ENCODE measurements at regions of chr17 and their contacts with region 1.

Region 1: DNA sequence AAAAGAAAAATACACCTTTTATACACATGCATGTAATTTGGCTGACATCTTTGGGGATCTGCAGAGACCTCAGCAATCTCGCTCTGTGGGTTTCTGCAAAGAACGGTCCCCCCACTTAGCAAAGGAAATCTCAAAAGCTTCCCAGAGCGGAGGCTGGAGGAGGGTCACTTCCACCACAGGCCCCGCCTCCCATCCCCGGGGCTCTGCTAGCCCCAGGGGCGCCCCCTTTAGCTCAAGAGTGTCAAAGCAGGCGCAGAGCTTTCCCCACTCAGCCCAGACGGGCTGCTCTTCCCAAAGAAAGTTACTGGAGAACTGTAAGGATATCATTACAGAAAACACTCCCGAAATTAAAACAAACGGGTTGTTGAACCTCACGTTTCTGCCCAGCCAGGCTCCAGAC is 11.4 kb downstream of the SLC13A5 start:
- DNase-seq: peak; percentile 61
- ATAC-seq: peak; percentile 29
- H3K4me3 ChIP-seq: peak overlapping the region in 1 of 3 experiments; percentile 41; a peak in 1 of 6 replicates
- H3K27ac ChIP-seq: peak overlapping the region; percentile 97
- H3K4me1 ChIP-seq: peaks cover 87% of the 10 kb centered on the region
- H3K27me3 ChIP-seq: no peaks in the 10 kb centered on the region
- CTCF ChIP-seq: peak; percentile 64
- EP300 ChIP-seq: no peak
- POLR2A ChIP-seq: no peak
- RAD21 ChIP-seq: peak; percentile 46; the same call in 1 of the 2 replicates

Region 2: GRCh38 chr17:6677158-6677831 is 24.4 kb before region 1 on chr17:
- CTCF ChIA-PET with region 1: no interaction called
- POLR2A ChIA-PET with region 1: interaction called, 265 read pairs
- in situ Hi-C with region 1: no loop called
- intact Hi-C with region 1: loop called (anchors 2 kb)
- DNase-seq: peak; percentile 27
- ATAC-seq: peak; percentile 69
- H3K4me3 ChIP-seq: peak overlapping the region; percentile 33 to 64 (median 43); a peak in 5 of 6 replicates
- H3K27ac ChIP-seq: peak overlapping the region; percentile 49
- H3K4me1 ChIP-seq: peaks cover 72% of the 10 kb centered on the region
- H3K27me3 ChIP-seq: no peaks in the 10 kb centered on the region; a peak in 1 of 5 replicates
- CTCF ChIP-seq: no peak; the same call in 1 of the 2 replicates
- EP300 ChIP-seq: no peak
- POLR2A ChIP-seq: peak in 1 of 2 experiments; percentile 50; a peak in 1 of 4 replicates
- RAD21 ChIP-seq: no peak

Region 3: GRCh38 chr17:6686026-6686425 is 15.7 kb before region 1 on chr17:
- CTCF ChIA-PET with region 1: no interaction called
- POLR2A ChIA-PET with region 1: interaction called, 265 read pairs
- in situ Hi-C with region 1: no loop called
- intact Hi-C with region 1: loop called (anchors 2 kb)
- DNase-seq: no peak
- ATAC-seq: no peak
- H3K4me3 ChIP-seq: no peak overlapping the region
- H3K27ac ChIP-seq: no peak overlapping the region
- H3K4me1 ChIP-seq: peaks cover 52% of the 10 kb centered on the region
- H3K27me3 ChIP-seq: no peaks in the 10 kb centered on the region
- CTCF ChIP-seq: no peak
- EP300 ChIP-seq: no peak
- POLR2A ChIP-seq: no peak
- RAD21 ChIP-seq: no peak

Region 4: DNA sequence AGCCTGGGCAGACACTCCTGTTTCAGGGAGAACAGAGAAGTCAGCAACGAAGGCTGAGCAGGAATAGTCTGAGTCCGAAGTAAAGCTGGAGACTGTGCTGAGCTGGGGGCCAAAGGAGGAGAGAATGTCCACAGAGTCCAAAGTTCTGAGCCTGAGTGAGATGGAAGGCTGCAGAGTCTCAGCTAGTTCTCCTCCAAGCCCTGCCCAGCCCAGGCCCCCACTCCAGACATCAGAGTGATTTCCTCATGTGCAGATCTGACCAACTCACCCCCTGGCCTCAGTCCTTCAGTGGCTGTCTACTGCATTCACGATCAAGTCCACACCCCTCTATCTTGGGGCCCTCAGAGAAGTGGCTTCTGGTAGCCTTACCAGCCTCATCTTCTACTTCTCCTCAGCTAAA is 10.2 kb before region 1 on chr17:
- CTCF ChIA-PET with region 1: no interaction called
- POLR2A ChIA-PET with region 1: interaction called, 265 read pairs
- in situ Hi-C with region 1: no loop called
- intact Hi-C with region 1: no loop called
- DNase-seq: no peak
- ATAC-seq: no peak; the same call in 2 of the 3 replicates
- H3K4me3 ChIP-seq: no peak overlapping the region
- H3K27ac ChIP-seq: no peak overlapping the region
- H3K4me1 ChIP-seq: peaks cover 17% of the 10 kb centered on the region
- H3K27me3 ChIP-seq: no peaks in the 10 kb centered on the region
- CTCF ChIP-seq: no peak
- EP300 ChIP-seq: no peak
- POLR2A ChIP-seq: no peak
- RAD21 ChIP-seq: no peak

Region 5: GRCh38 chr17:6796887-6797490 is 95.3 kb after region 1 on chr17:
- CTCF ChIA-PET with region 1: no interaction called
- POLR2A ChIA-PET with region 1: interaction called, 22 read pairs
- in situ Hi-C with region 1: no loop called
- intact Hi-C with region 1: no loop called
- DNase-seq: no peak
- ATAC-seq: no peak
- H3K4me3 ChIP-seq: peak overlapping the region in 2 of 3 experiments; percentile 42 to 52; a peak in 2 of 6 replicates
- H3K27ac ChIP-seq: peak overlapping the region; percentile 78
- H3K4me1 ChIP-seq: peaks cover 54% of the 10 kb centered on the region
- H3K27me3 ChIP-seq: no peaks in the 10 kb centered on the region
- CTCF ChIP-seq: no peak
- EP300 ChIP-seq: no peak
- POLR2A ChIP-seq: no peak
- RAD21 ChIP-seq: no peak